Left cardiac atrium (tissue), 4 donors: ENCODE measurements at regions of chrX and their contacts with region 1.

Region 1: DNA sequence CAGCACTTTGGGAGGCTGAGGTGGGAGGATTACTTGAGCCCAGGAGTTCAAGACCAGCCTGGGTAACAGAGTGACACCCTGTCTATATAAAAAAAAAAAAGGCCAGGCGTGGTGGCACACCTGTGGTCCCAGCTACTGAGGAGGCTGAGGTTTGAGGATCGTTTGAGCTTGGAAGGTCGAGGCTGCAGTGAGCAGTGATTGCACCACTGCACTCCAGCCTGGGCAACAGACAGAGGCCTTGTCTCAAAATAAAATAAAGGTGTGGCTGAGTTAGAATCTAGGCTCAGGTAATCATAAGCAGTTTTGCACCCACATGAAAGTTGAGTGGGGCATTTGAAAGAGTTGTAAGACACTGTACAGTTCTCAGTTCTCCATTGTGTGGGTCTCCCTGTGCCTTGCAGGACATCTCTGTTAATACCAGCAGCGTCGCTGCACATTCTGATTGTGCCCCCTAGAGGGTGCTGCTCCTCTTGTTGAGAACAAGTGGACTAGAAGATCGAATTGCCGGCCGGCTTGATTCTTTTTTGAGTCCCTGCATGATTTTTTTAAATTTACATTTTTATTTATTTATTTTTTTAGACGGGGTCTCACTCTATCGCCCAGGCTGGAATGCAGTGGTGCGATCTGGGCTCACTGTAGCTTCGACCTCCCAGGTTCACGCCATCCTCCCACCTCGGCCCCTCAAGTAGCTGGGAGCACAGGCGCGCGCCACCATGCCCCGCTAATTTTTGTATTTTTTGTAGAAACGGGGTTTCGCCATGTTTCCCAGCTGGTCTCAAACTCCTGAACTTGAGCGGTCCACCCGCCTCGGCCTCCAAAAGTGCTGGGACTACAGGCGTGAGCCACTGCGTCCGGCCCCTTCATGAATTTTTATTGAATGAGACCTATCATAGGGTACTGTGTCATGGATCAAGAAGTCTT is 73.6 kb upstream of the RBMX start:
- DNase-seq: peak; percentile 59
- ATAC-seq: peak in 1 of 2 donors; percentile 78

Region 2: DNA sequence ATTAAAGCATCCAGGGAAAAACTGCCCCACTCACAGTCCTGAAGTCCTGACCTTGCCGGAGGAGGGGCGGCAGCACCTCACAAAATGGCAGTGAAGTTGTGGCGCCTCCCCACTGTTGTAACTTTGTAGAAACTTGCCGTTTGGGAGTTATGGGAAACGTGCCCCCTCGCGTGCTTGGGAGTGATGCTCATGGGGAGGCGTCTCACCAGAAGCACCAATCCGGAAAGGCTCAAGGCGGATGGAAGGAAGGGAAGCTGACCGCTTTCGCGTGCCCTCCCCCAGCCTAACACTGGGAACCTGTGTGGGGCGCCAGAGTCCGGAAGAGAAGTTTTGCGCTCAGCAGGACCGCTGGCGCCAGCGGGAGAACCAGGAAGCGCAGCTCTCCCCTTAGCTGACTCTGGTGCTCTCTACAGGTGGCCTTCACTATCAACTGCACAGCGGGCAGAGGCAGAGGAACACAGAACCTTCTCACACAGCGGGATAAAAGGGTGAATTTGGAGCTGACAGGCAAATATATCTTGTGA is 1060.8 kb before region 1 on chrX and contains the starts of genes CT45A10 and SAGE1:
- intact Hi-C with region 1: no loop called
- DNase-seq: no peak
- ATAC-seq: no peak
- total RNA-seq, gene CT45A10: not detected
- total RNA-seq, gene SAGE1: not detected

Region 3: DNA sequence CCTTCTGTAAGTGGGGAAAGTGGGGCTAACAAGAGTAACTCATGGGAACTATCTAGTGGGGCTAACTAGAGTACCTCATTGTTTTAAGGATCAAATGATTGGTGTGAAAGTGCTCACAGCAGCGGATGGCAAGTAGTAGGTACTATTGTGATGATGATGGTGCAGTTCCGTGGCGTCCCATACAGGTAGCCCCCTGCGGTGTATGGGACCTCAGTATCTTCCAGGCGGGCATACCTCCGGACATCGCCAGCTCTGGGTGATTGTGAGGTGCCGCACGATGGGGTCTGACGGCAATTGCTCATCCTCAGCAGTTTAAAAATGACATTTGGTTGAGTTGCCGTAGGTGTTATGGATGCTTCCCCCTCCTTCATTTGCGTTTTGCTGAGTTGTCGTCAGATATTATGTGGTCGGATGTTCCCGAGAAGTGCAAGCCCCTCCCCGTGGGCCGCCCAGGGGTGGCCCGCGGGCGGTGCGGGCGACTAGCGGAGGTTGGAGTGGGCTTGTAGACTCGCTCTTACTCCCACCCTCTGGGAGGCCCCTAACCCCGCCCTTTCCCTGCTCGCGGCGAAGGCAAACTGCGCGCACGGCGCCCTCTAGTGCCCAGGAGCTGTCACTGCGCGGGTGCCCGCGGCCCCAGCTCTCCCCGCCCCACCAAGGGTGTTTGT is 98.0 kb after region 1 on chrX:
- intact Hi-C with region 1: loop called in 1 of 2 experiments (anchors 10 kb)
- DNase-seq: peak; percentile 66
- ATAC-seq: peak; percentile 87 to 95

Region 4: DNA sequence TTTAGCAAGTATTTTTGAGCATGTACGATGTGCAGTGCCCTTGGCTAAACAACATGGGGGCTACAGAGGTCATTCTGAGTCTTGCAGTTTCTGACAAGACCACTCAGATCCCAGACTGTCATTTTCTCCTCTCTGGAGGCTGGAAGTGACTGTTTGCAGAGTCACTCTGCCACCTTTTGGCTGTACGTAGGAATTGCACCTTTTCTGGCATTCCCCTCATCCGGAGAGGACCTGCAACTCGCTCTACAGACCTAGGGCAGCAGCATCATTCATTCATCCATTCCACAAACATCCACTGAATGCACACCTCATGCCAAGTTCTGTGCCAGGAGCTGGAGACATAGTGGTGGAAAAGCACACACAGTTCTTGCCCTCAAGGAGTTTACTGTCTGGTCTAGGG is 240.0 kb after region 1 on chrX:
- intact Hi-C with region 1: loop called in 1 of 2 experiments (anchors 10 kb)
- DNase-seq: no peak
- ATAC-seq: no peak